Calu3 (cell line): ENCODE measurements at regions of chr6 and their contacts with region 1.

Region 1: DNA sequence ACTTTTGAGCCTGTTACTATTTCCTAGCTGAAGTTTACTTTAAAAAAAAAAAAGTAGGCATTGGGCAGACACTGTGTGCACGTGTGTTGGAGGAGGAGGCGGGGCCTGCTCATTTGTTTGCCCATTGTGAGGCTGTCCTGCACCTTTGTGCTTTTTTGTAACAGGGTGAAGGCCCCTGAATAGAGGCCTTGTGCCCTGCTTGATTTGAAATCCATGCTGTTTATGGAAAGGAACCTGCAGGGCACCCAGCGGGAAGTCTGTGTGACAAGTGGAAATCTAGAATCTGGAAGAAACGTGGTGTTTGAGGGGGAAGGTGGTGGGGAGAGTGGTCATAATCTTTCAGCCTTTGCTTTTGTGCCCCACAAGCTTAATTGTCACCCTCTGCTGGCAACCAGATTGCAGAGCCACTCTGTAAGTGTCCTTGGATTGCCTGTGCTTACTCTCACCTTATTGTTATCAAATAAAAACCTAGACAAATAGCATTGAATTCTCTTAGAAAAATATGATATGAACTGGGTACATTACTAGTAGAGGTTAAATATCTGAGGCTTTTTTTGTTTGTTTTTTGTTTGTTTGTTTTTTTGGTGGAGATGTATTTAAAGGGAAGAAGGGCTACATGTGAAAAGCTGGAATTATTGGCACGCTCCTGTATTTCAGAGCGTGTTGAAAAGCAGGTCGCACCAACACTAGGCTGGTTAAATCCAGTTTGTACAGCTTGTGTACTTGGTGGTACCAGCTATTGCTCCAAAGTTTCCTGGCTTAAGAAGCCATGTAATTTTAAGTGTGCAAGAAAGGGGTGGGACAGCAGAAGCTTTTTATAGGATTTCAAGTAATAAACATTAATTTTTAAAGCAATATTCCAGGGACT is 156.3 kb downstream of the ARID1B start:
- DNase-seq: peak; percentile 41
- H3K4me3 Mint-ChIP-seq: peak overlapping the region; percentile 61
- H3K27ac Mint-ChIP-seq: peak overlapping the region; percentile 80
- H3K4me1 Mint-ChIP-seq: peaks cover 19% of the 10 kb centered on the region
- H3K27me3 Mint-ChIP-seq: no peaks in the 10 kb centered on the region
- CTCF ChIP-seq: no peak

Region 2: DNA sequence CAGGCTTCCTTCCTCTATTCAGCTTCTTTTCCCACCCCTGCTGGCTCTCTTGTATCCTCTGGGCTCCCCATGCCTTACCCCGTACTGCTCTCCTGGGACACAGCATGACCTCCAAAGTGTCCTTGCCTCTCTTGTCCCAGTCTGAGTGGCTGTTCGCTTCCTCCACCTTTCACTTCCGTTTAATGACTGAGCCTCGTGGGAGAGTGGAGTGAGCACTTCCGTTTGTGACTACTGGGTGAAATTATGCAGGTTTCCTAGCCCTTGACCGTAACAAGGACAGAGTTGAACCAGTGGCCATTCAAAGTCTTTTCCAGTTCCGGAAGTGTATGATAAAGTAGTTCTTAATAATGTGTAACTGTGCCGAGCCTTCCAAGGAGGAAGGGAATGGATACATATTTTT is 47.0 kb before region 1 on chr6:
- CTCF ChIA-PET with region 1: no interaction called
- intact Hi-C with region 1: loop called (anchors 5 kb)
- DNase-seq: peak; percentile 64
- H3K4me3 Mint-ChIP-seq: peak overlapping the region; percentile 67
- H3K27ac Mint-ChIP-seq: peak overlapping the region; percentile 92
- H3K4me1 Mint-ChIP-seq: peaks cover 50% of the 10 kb centered on the region
- H3K27me3 Mint-ChIP-seq: no peaks in the 10 kb centered on the region
- CTCF ChIP-seq: no peak

Region 3: DNA sequence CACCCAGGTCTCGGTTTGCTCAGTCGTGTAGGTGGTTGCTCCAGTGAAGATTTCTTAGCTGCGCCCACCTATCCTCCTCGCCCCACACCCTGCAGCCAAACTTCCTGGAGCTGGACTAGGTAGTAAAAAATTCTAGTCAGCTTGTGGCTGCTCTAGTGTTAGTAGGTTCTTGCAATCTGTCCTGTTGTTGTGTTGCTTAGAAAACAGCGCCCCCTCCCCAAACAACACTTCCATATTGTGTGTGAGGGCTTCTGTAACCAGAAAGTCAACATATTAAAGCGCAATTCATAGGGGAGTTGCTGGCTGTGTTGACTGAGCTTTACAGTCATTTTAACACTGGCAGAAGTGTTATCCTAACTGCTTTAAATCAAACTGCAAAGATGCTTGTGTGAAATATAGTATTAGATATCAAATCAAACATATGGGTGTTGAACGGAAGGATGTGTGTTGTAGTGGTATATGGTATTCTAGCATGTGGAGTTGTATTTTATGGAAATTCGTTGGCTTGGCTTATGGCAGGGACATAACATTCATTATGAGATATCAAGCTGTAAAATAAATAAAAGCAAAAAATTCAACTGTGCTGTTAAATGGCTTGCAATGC is 33.8 kb before region 1 on chr6:
- CTCF ChIA-PET with region 1: no interaction called
- intact Hi-C with region 1: no loop called
- DNase-seq: no peak
- H3K4me3 Mint-ChIP-seq: no peak overlapping the region
- H3K27ac Mint-ChIP-seq: no peak overlapping the region
- H3K4me1 Mint-ChIP-seq: no peaks in the 10 kb centered on the region
- H3K27me3 Mint-ChIP-seq: no peaks in the 10 kb centered on the region
- CTCF ChIP-seq: no peak

Region 4: GRCh38 chr6:157045831-157046454 is 112.5 kb after region 1 on chr6:
- CTCF ChIA-PET with region 1: interaction called, 10 read pairs
- intact Hi-C with region 1: no loop called
- DNase-seq: peak; percentile 8
- H3K4me3 Mint-ChIP-seq: no peak overlapping the region
- H3K27ac Mint-ChIP-seq: no peak overlapping the region
- H3K4me1 Mint-ChIP-seq: no peaks in the 10 kb centered on the region
- H3K27me3 Mint-ChIP-seq: no peaks in the 10 kb centered on the region
- CTCF ChIP-seq: peak; percentile 30